Right ventricle myocardium inferior (tissue), 1 donor: ENCODE measurements at regions of chr5 and their contacts with region 1.

Region 1: DNA sequence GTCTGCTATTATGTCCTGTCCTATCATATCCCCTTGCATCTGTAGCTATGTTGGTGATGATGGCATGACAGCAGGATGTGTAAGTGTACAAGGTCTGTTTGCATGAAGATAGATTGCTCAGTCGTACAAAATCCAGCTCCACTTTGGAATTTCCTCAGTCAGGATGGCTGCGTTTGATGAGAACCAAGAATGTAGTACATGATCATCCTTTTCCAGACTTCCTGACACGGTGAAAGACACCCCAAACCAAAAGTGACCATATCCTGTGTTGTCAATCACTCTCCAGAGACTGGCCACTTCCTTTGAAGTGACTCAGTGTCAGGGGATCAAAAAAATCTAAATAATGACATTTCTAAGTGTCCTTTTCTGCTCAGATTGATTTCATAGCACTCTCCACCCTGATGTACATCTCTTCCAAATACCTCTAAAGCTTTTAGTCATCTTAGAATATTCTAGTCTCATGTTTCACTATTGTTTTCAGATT is 213.4 kb downstream of the PLK2 start:
- DNase-seq: no peak
- ATAC-seq: no peak

Region 2: GRCh38 chr5:57887851-57888621 is 358.5 kb before region 1 on chr5:
- intact Hi-C with region 1: loop called (anchors 5 kb)
- DNase-seq: no peak
- ATAC-seq: peak; percentile 78

Region 3: DNA sequence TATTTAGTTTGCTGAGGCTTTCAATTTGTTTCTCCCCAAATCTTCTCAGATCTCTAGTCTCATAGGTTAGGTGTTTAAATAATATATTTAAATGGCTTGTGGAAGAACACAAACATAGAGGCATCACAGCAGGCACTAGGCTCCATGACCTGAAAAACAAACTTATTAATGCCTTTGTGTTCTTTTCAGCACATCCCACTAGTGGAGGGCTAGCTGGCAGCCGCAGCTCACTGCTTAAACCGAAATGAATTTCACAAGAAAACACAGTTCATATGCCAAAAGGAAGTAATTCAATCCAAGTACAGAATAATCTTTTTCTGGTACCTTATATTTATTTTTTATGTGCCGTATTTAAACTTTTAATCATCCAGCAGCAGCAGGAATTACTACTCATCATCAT is 169.1 kb before region 1 on chr5:
- intact Hi-C with region 1: loop called (anchors 5 kb)
- DNase-seq: peak; percentile 69
- ATAC-seq: peak; percentile 63

Region 4: DNA sequence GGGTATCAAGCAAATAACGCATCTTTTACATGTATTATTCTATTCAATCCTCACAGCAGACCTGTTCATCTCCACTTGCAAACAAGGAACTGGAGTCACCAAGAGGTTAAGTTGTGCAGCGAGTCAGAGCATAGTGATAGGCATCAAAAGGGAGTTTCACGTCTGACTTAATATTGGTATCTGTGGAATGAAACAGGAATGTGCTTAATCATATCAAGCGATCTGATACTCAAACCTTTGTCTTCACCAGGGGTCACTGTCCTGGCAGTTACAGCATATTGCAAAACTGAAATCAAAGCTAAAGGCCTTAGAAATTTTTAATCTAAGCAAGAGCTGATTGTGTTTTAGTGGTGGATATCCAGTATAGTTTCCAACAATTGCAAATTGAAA is 58.2 kb before region 1 on chr5:
- intact Hi-C with region 1: loop called (anchors 5 kb)
- DNase-seq: no peak
- ATAC-seq: no peak